K562 (cell line): ENCODE measurements at regions of chr5 and their contacts with region 1.

Region 1: GRCh38 chr5:77650686-77651085 is 12.2 kb upstream of the OTP start:
- DNase-seq: no peak
- ATAC-seq: no peak
- H3K4me3 ChIP-seq: no peak overlapping the region
- H3K27ac ChIP-seq: no peak overlapping the region
- H3K4me1 ChIP-seq: peaks cover 0 to 3% of the 10 kb centered on the region in 2 experiments; a peak in 1 of 5 replicates
- H3K27me3 ChIP-seq: peaks cover 0 to 9% of the 10 kb centered on the region in 2 experiments; a peak in 2 of 5 replicates
- CTCF ChIP-seq: no peak
- EP300 ChIP-seq: no peak
- POLR2A ChIP-seq: no peak
- RAD21 ChIP-seq: no peak

Region 2: GRCh38 chr5:77957931-77958521 is 307.3 kb after region 1 on chr5:
- CTCF ChIA-PET with region 1: no interaction called
- POLR2A ChIA-PET with region 1: no interaction called
- in situ Hi-C with region 1: loop called (anchors 10 kb)
- intact Hi-C with region 1: no loop called
- DNase-seq: no peak
- ATAC-seq: no peak
- H3K4me3 ChIP-seq: no peak overlapping the region
- H3K27ac ChIP-seq: no peak overlapping the region
- H3K4me1 ChIP-seq: peaks cover 0 to 9% of the 10 kb centered on the region in 2 experiments; a peak in 1 of 5 replicates
- H3K27me3 ChIP-seq: peaks cover 28 to 29% of the 10 kb centered on the region in 2 experiments
- CTCF ChIP-seq: no peak
- EP300 ChIP-seq: no peak
- POLR2A ChIP-seq: no peak
- RAD21 ChIP-seq: no peak